Activated CD4-positive, alpha-beta memory T cell treated with anti-CD3 and anti-CD28 coated beads, Interleukin-2, amount 10 ng/mL, durations not matched to agents 7 days and 5 days (primary cell): ENCODE measurements at regions of chr16 and their contacts with region 1.

Region 1: GRCh38 chr16:77584205-77584859 is 138.0 kb upstream of the NUDT7 start:
- DNase-seq: peak; percentile 46
- H3K4me3 Mint-ChIP-seq: no peak overlapping the region
- H3K27ac Mint-ChIP-seq: no peak overlapping the region
- H3K4me1 Mint-ChIP-seq: peaks cover 21% of the 10 kb centered on the region
- H3K27me3 Mint-ChIP-seq: peaks cover 13% of the 10 kb centered on the region

Region 2: GRCh38 chr16:77236063-77236511 is 348.2 kb before region 1 on chr16:
- CTCF ChIA-PET with region 1: interaction called, 41 read pairs
- POLR2A ChIA-PET with region 1: no interaction called
- DNase-seq: peak; percentile 88
- H3K4me3 Mint-ChIP-seq: no peak overlapping the region
- H3K27ac Mint-ChIP-seq: no peak overlapping the region
- H3K4me1 Mint-ChIP-seq: peaks cover 6% of the 10 kb centered on the region
- H3K27me3 Mint-ChIP-seq: peaks cover 10% of the 10 kb centered on the region